Activated T-helper 1 cell treated with anti-CD3 and anti-CD28 coated beads, Interleukin-12 subunit alpha, Interleukin-12 subunit beta, Interleukin-2, Interleukin-4 antibody, amounts not matched to agents 30 ng/mL and 10 ng/mL and 1 ng/mL, durations not matched to agents 14 hours and 24 hours and 36 hours (primary cell): ENCODE measurements at regions of chr2 and their contacts with region 1.

Region 1: GRCh38 chr2:85288244-85288725 is 39.5 kb downstream of the TGOLN2 start:
- DNase-seq: no peak
- H3K4me3 Mint-ChIP-seq: no peak overlapping the region
- H3K27ac Mint-ChIP-seq: no peak overlapping the region
- H3K4me1 Mint-ChIP-seq: peaks cover 29% of the 10 kb centered on the region
- H3K27me3 Mint-ChIP-seq: no peaks in the 10 kb centered on the region

Region 2: DNA sequence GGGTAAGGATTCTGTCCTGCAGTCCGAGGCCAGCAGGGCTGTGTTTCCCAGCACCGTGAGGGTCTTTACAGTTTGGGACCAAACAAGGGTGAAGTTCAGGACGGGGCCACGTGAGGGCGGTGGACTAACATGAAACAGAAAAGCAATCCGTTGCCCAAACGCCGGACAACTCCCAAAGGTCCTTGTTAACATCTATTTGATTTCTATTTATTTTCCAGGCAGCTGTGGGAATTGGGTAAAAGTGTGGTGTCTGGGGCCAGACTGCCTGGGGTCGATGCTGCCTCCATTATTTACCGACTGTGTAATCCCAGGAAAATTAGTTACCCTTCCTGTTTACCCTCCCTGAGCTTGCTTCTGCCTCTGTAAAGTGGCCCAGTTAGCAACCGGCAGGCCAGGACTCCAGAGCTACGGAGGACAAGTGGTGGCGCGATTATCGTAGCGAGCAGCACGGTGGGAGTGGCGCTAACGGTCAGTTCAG is 221.4 kb before region 1 on chr2:
- intact Hi-C with region 1: loop called (anchors 1 kb)
- DNase-seq: peak; percentile 5
- H3K4me3 Mint-ChIP-seq: peak overlapping the region; percentile 15
- H3K27ac Mint-ChIP-seq: no peak overlapping the region
- H3K4me1 Mint-ChIP-seq: peaks cover 8% of the 10 kb centered on the region
- H3K27me3 Mint-ChIP-seq: peaks cover 29% of the 10 kb centered on the region

Region 3: DNA sequence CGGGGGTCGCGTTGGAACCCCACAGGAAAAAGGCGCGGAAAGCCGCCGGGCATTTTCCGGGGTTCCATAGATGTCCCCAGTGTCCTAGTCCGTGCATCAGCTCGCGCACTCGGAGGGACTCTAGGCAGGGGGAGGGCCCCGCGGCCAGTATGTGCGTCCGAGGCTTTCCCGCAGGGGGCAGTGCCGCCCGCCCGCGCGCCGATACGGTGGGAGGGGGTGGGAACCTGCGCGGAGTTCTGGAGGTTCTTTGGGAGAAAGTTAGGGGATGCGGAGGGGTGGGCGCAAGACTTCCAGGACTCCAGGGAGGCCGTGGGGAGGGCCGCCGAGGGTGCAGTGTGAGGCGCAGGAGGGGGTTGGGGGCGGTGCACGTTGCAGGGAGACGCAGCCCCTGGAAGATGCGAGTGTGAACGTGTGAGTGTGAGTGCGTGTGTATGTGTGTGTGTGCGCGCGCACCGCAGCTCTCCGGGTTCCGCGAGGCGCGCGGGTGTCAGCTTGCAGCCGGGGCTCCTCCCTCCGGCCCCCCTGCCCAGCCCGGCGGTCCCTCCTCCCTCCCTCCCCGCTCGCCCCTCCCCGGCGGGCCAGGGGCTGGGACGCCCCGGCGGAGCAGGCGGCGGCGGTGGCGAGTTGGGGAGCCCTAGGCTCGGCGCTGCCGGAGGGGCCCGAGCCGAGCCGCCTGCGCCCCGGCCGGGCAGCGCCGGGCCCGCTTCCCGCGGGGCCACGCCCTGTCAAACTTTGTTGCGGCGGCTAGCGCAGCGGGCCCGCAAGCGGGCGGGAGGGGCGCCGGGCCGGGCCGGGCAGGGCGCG is 155.2 kb before region 1 on chr2 and contains the start of gene TCF7L1:
- intact Hi-C with region 1: loop called (anchors 5 kb)
- DNase-seq: peak; percentile 20
- H3K4me3 Mint-ChIP-seq: peak within 1 kb of the TSS; percentile 72
- H3K27ac Mint-ChIP-seq: no peak within 1 kb of the TSS
- H3K4me1 Mint-ChIP-seq: peaks cover 8% of the 10 kb centered on the region
- H3K27me3 Mint-ChIP-seq: peaks cover 63% of the 10 kb centered on the region
- total RNA-seq, gene TCF7L1: not detected in 2 replicates

Region 4: GRCh38 chr2:85181134-85181631 is 107.1 kb before region 1 on chr2:
- intact Hi-C with region 1: loop called (anchors 1 kb)
- DNase-seq: no peak
- H3K4me3 Mint-ChIP-seq: no peak overlapping the region
- H3K27ac Mint-ChIP-seq: no peak overlapping the region
- H3K4me1 Mint-ChIP-seq: peaks cover 11% of the 10 kb centered on the region
- H3K27me3 Mint-ChIP-seq: peaks cover 11% of the 10 kb centered on the region

Region 5: DNA sequence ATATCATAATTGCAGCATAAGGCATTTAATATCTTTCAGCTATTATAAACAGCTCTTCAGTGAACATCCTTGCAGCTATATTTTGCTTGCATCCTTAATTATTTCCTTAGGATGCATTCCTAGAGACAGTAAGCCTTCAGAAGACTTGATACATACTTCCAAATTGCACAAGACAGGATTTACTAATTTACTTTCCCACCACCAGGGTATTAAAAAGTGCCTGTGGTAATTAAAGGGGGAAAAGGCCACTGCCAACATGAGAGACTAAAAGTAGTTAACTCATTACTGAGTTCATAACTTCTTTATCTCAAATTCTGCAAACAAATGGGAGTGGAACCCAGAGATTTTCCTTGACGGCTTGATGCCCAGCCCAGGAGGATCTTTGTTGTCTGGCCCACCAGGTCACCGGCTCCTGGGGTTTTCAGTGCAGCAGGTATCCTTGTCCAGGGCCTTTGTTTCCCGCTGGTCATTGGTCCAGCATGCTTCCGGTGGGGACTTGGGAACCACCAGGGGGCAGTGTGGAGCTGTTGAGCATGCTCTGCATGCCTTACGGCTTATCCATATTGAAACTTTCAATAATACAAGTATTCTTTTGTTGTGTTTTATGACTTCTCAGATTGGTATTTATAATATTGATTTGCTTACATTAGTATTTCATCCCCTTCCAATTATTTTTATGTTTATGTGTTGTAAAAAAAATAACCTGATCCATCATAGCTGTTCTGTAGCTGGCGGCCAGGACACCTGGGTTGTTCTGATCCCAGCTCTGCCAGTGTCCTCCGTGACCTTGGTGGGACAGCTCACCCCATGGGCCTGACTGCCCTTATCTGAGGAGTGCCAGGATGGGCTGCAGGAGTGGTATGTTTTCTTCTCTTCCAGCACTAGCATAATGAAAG is 21.9 kb before region 1 on chr2:
- intact Hi-C with region 1: loop called (anchors 1 kb)
- DNase-seq: peak; percentile 47
- H3K4me3 Mint-ChIP-seq: no peak overlapping the region
- H3K27ac Mint-ChIP-seq: no peak overlapping the region
- H3K4me1 Mint-ChIP-seq: no peaks in the 10 kb centered on the region
- H3K27me3 Mint-ChIP-seq: peaks cover 9% of the 10 kb centered on the region

Region 6: DNA sequence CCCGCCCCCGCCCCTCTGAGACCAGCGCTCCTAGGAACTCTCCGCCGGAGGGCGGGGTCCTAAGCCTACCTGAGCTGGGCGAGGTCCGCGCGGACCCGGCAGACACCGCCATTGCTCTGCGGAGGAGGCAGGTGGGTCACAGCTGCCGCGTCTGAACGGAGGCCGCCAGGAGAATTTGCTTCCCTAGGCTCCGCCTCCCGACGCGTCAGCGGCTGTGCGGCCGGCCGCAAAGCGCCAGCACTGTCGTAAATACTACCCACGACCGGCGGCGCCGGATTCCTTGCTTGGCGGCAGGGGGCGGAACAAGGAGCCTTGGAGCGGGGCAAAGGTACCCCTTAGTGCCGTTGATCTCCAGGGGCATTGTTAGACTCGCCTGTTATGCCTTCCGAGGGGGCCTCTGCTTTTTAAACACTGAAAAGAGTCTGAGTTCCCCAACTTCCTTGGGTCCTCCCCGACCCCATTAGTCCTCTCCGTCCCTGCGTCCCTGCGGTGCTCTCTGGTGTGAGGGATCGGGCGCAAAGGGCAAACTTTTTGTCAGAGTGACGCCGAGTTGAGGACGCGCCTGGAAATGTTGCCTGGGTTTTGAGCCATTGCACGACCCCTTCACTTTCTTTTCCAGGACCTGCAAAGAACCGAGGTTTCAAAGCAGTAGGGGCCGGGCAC is 273.2 kb after region 1 on chr2 and contains the start of gene GGCX:
- intact Hi-C with region 1: no loop called
- DNase-seq: peak; percentile 88
- H3K4me3 Mint-ChIP-seq: peak within 1 kb of the TSS; percentile 94
- H3K27ac Mint-ChIP-seq: peak within 1 kb of the TSS; percentile 81
- H3K4me1 Mint-ChIP-seq: peaks cover 36% of the 10 kb centered on the region
- H3K27me3 Mint-ChIP-seq: no peaks in the 10 kb centered on the region
- total RNA-seq, gene GGCX: 26.2 and 28.3 TPM in 2 replicates